Panc1 (cell line): ENCODE measurements at regions of chr17 and their contacts with region 1.

Region 1: DNA sequence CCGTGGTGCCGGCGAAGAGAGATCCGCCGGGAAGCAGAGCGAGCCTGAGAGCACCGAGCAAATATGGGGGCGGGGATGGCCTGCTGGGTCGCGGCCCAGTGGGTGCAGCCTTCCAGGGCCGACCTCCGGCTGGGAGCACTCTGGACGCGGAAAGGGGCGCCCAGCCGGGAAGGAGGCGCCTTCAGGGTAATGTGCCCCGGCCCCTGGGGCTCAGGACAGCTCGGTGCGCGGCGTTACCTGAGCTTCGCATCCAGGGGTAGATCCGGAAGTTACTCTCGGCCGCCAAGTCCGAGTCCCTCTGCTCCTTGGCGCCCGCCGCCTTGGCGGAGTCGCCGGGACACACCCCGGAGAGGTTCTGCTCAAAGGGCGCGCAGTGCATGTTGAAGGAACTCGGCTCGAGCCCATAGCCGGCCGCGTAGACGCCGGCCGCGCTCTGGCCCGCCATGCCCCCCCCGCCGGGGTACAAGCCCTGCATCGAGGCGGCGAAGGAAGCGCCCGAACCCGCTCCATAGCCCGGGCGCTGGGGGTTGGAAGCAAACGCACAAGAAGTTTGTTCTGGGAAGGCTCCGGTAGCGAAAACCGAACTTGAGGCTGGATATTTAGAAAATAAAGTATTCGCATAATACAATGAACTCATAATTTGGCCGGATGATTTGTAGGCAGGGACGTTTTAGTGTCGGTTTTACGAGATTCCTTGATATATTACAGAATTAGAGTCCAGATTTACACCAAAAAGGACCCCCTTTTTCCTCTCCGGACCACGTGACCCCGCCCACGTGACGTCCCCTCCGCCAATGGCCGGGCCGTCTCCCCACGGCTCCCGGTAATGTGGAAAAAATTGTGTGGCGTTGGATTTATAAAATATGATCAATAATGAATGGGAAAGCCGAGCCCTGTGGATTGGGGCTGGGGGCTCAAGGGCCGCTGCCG is at the start of gene HOXB7:
- DNase-seq: no peak
- ATAC-seq: peak; percentile 22
- H3K4me3 ChIP-seq: peak within 1 kb of the TSS; percentile 68 to 71
- H3K27ac ChIP-seq: peak within 1 kb of the TSS; percentile 99
- H3K4me1 ChIP-seq: peaks cover 55% of the 10 kb centered on the region
- H3K27me3 ChIP-seq: no peaks in the 10 kb centered on the region
- CTCF ChIP-seq: no peak
- total RNA-seq, gene HOXB7: 44.0 TPM

Region 2: DNA sequence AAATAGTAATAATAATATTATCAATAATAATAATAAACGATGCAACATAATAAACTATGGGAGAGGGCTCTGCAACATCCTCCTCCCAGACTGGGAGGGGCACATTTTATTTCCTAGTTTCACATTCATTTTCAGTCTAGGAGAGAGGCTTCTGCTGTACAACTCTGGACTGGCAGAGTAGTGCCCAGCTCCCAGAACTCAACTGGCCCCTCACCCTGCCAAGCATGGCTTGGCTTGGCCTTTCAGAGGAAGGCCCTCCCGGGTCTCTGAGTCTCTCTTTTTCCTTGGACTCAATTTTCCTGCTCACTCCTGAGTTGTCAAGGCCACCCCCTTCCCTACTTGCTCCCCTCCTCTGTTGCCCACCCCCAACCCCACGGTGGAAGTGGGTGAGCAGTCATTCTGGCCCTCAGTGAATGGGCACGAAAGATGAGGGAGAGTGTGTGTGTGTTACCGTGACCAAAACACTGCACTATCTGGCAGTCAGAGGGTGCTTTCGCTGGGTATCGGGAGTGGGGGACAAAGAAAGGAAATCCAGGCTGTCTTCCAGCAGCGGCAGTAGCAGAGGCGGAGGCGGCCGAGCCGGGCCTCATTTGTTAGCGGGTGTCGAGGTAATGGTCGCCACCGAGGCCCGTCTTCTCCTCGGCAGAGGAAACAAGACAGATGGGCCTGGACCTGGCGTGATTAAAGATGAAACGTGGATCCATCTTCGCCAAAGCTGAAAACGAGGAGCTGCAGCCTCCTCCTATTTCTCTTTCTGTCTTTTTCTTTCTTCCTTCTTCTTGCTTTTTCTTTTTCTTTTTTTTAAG is 34.7 kb before region 1 on chr17:
- CTCF ChIA-PET with region 1: no interaction called
- POLR2A ChIA-PET with region 1: interaction called, 4 read pairs
- in situ Hi-C with region 1: no loop called
- intact Hi-C with region 1: loop called (anchors 1 kb)
- DNase-seq: no peak
- ATAC-seq: 0 out of 2 replicates have a peak, but pooled peaks have one; percentile 9
- H3K4me3 ChIP-seq: peak overlapping the region; percentile 70 to 99
- H3K27ac ChIP-seq: peak overlapping the region; percentile 97
- H3K4me1 ChIP-seq: peaks cover 88% of the 10 kb centered on the region
- H3K27me3 ChIP-seq: no peaks in the 10 kb centered on the region
- CTCF ChIP-seq: no peak

Region 3: GRCh38 chr17:48841395-48841831 is 230.9 kb after region 1 on chr17:
- CTCF ChIA-PET with region 1: no interaction called
- POLR2A ChIA-PET with region 1: interaction called, 19 read pairs
- in situ Hi-C with region 1: no loop called
- intact Hi-C with region 1: no loop called
- DNase-seq: no peak
- ATAC-seq: no peak
- H3K4me3 ChIP-seq: no peak overlapping the region
- H3K27ac ChIP-seq: peak overlapping the region; percentile 49
- H3K4me1 ChIP-seq: peaks cover 12% of the 10 kb centered on the region
- H3K27me3 ChIP-seq: no peaks in the 10 kb centered on the region
- CTCF ChIP-seq: no peak